Mammary epithelial cell (primary cell): ENCODE measurements at regions of chr11 and their contacts with region 1.

Region 1: DNA sequence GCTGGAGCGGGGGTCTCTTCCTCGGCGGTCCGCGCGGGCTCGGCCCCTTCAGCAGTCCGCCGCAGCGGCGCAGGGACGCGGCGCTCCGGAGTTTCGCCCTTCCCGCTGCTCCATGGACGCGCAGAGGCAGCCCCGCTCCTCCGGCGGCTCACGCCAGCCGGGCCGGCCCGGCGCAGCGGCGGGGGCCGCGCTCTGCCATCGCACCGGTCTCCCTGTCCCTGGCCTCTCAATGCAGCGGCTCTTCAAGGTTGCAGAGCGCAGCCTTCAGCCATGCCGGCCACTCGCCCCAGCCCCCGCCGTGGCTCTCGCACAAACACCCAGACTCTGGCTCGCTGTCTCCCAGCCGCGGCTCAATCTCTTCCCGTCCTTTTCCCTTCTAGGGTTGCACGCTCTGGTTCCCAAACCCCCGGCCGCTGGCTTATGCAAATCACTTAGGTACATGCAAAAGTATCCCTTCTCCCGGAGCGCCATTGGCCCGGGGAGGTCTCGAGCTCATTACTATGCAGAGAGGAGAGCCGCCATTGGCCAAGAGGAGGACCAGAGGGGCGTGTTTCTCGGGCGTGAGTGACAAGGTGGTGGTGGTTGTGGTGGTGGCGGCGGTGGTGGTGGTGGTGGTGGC is at the start of gene LGR4:
- DNase-seq: peak; percentile 96
- H3K4me3 ChIP-seq: peak within 1 kb of the TSS; percentile 64 to 85 (median 80)
- H3K27ac ChIP-seq: peak within 1 kb of the TSS; percentile 99
- H3K4me1 ChIP-seq: peaks cover 33% of the 10 kb centered on the region
- H3K27me3 ChIP-seq: no peaks in the 10 kb centered on the region
- CTCF ChIP-seq: no peak
- total RNA-seq, gene LGR4: 27.8 to 45.8 TPM

Region 2: GRCh38 chr11:26621141-26621540 is 851.4 kb before region 1 on chr11:
- CTCF ChIA-PET with region 1: no interaction called
- dilution Hi-C with region 1: no loop called
- in situ Hi-C with region 1: no loop called
- intact Hi-C with region 1: loop called (anchors 2 kb)
- DNase-seq: peak; percentile 91
- H3K4me3 ChIP-seq: no peak overlapping the region
- H3K27ac ChIP-seq: peak overlapping the region; percentile 98
- H3K4me1 ChIP-seq: peaks cover 31% of the 10 kb centered on the region
- H3K27me3 ChIP-seq: no peaks in the 10 kb centered on the region
- CTCF ChIP-seq: no peak

Region 3: GRCh38 chr11:27209562-27210005 is 262.9 kb before region 1 on chr11:
- CTCF ChIA-PET with region 1: interaction called, 6 read pairs
- dilution Hi-C with region 1: no loop called
- in situ Hi-C with region 1: no loop called
- intact Hi-C with region 1: loop called (anchors 5 kb)
- DNase-seq: peak; percentile 98
- H3K4me3 ChIP-seq: no peak overlapping the region
- H3K27ac ChIP-seq: peak overlapping the region; percentile 67
- H3K4me1 ChIP-seq: peaks cover 28% of the 10 kb centered on the region
- H3K27me3 ChIP-seq: no peaks in the 10 kb centered on the region
- CTCF ChIP-seq: no peak

Region 4: GRCh38 chr11:27350511-27351300 is 121.8 kb before region 1 on chr11:
- CTCF ChIA-PET with region 1: no interaction called
- dilution Hi-C with region 1: no loop called
- in situ Hi-C with region 1: no loop called
- intact Hi-C with region 1: no loop called
- DNase-seq: no peak
- H3K4me3 ChIP-seq: no peak overlapping the region
- H3K27ac ChIP-seq: no peak overlapping the region
- H3K4me1 ChIP-seq: no peaks in the 10 kb centered on the region
- H3K27me3 ChIP-seq: no peaks in the 10 kb centered on the region
- CTCF ChIP-seq: no peak

Region 5: GRCh38 chr11:27362749-27363575 is 109.5 kb before region 1 on chr11 and contains the start of gene CCDC34:
- CTCF ChIA-PET with region 1: no interaction called
- dilution Hi-C with region 1: no loop called
- in situ Hi-C with region 1: no loop called
- intact Hi-C with region 1: loop called (anchors 1 kb)
- DNase-seq: peak; percentile 92
- H3K4me3 ChIP-seq: peak within 1 kb of the TSS; percentile 63 to 87 (median 83)
- H3K27ac ChIP-seq: peak within 1 kb of the TSS; percentile 78
- H3K4me1 ChIP-seq: peaks cover 17% of the 10 kb centered on the region
- H3K27me3 ChIP-seq: no peaks in the 10 kb centered on the region
- CTCF ChIP-seq: no peak
- total RNA-seq, gene CCDC34: 2.5 to 10.4 TPM

Region 6: DNA sequence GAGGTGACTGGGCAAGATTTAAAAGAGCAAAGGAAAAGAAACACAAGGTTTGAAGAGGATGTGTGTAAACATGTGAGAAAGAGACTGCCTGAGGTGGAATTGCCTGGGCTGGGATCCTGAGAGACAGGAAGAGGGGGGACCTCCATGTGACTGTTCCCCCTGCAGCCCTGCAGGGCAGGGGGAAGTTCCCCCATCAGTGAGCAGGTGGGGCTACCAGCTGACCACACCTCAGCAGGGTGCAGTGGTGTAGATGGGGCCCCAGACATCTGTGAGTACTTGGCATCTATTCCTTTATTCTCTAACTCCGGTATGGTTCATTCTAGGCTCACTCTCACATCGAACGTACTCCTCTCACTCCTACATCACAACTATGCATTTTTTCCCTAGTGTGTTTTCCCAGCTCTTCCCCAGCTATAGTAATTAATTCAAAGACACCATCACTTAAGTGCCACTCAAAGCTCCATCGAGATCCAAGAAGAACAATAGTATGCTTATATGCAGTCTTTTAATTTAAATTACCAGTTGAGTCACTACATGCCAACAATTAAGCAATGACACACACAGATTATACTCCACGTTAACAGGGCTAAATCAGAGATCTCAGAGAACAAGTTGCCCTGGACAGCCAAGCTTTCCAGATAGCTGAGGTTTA is 42.6 kb before region 1 on chr11:
- CTCF ChIA-PET with region 1: no interaction called
- dilution Hi-C with region 1: no loop called
- in situ Hi-C with region 1: no loop called
- intact Hi-C with region 1: loop called (anchors 5 kb)
- DNase-seq: peak; percentile 69
- H3K4me3 ChIP-seq: peak overlapping the region; percentile 8 to 25 (median 20)
- H3K27ac ChIP-seq: peak overlapping the region; percentile 68
- H3K4me1 ChIP-seq: peaks cover 51% of the 10 kb centered on the region
- H3K27me3 ChIP-seq: no peaks in the 10 kb centered on the region
- CTCF ChIP-seq: no peak